Activated B cell treated with CpG ODN at 0.5 μM for 24 hours (primary cell): ENCODE measurements at regions of chr11 and their contacts with region 1.

Region 1: DNA sequence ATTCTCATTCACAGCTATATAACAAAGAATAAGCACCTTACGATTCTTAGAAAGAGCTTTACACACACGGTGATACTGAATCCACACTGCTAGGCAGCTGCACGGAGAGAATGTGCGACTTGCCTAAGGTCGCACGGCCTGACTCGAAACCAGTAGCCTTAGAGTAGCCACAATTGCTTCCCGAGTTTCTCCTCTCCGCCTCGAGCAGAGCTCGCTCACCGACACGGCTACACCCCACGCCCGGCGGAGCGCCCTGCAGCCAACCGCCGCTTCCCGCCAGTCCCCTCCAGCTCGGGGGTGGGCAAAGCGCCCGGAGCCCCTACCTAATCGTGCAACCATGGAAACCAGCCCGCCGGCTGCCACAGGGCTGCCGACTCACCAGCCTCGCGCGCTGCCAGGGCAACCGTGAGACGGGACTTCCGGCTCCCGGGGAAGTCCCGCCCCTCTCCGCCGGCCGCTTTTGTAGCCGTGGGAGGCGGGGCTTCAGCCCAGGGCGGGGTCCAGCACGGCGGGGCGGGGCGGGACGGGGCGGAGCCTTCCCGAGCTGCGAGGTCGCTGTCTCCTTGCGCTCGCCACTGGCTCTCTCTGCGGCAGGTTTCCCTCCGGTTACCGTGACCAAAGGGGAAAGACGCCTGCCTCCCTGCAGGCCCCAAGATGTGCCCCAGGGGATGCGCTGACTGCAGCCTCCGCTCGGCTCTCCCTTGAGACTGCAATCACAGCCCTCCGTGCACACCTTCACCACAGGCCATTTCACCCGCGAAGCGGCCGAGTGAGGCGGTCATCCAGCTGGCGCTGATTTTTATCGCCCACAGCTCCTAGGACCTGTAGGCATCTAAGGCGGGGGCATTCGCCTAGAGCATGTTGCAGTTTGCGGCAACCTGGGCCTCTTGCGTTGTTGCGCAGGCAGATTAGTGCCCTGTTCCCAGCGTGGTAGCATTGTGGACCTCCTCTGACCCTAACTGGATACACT is 1.1 kb downstream of the BSCL2 start:
- DNase-seq: peak; percentile 90
- ATAC-seq: peak; percentile 73
- H3K4me3 Mint-ChIP-seq: peak overlapping the region; percentile 92
- H3K27ac Mint-ChIP-seq: peak overlapping the region; percentile 99
- H3K4me1 Mint-ChIP-seq: peaks cover 49% of the 10 kb centered on the region
- H3K27me3 Mint-ChIP-seq: no peaks in the 10 kb centered on the region
- CTCF ChIP-seq: no peak

Region 2: GRCh38 chr11:62054484-62055121 is 651.6 kb before region 1 on chr11:
- CTCF ChIA-PET with region 1: no interaction called
- POLR2A ChIA-PET with region 1: no interaction called
- intact Hi-C with region 1: no loop called
- DNase-seq: no peak
- ATAC-seq: no peak
- H3K4me3 Mint-ChIP-seq: no peak overlapping the region
- H3K27ac Mint-ChIP-seq: no peak overlapping the region
- H3K4me1 Mint-ChIP-seq: no peaks in the 10 kb centered on the region
- H3K27me3 Mint-ChIP-seq: peaks cover 23% of the 10 kb centered on the region
- CTCF ChIP-seq: no peak

Region 3: GRCh38 chr11:62573592-62574362 is 132.4 kb before region 1 on chr11 and contains the start of gene EEF1G:
- CTCF ChIA-PET with region 1: no interaction called
- POLR2A ChIA-PET with region 1: interaction called, 15 read pairs
- intact Hi-C with region 1: no loop called
- DNase-seq: peak; percentile 92
- ATAC-seq: peak; percentile 94
- H3K4me3 Mint-ChIP-seq: peak within 1 kb of the TSS; percentile 97
- H3K27ac Mint-ChIP-seq: peak within 1 kb of the TSS; percentile 94
- H3K4me1 Mint-ChIP-seq: peaks cover 51% of the 10 kb centered on the region
- H3K27me3 Mint-ChIP-seq: no peaks in the 10 kb centered on the region
- CTCF ChIP-seq: no peak
- total RNA-seq, gene EEF1G: 2,373 and 2,524 TPM in 2 replicates

Region 4: DNA sequence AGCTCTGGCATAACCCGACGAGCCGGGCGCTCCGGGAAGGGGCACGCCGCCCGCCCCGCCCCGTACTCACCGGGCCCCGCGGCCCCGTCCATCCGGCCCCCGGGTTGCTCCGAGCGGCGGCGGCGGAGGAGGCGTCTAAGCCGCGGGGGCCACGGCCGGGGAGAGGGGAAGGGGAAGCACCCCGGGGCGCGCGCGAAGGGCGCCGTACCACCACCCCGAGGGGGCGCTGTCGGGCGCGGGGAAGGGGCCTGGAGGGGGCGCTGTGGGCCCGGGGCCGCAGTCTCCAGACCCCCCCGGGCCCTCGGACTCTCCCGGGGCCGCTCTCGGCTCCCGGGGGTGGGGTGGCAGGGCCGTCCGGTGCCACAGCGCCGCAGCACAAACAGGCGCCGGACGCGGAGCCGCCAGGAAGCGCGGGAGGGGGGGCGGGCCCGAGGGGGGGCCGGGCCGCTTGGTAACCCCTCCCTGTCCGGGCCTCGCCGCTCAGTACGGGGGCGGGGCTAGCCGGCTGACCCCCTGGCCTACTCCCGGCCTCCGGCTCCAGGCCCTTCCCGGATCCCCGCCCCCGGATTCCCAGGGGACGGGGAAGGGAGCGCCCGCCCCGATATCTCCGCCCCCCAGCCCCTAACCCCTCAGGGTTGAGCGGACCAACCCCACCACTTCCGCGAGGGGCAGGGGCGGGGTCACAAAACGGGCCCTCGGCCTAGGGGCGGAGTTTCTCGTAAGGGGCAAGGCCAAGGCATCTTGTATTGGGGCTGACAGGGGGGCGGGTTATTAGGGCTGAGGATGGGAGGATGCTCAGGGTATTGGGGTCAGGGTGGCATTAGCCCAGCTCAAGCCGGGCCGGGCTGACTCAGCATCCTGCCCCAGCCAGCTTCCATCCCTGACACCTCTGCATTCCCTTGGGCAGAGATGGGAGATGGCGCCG is 93.5 kb before region 1 on chr11 and contains the starts of genes EML3 and ROM1:
- CTCF ChIA-PET with region 1: no interaction called
- POLR2A ChIA-PET with region 1: no interaction called
- intact Hi-C with region 1: loop called (anchors 1 kb)
- DNase-seq: peak; percentile 95
- ATAC-seq: peak; percentile 82
- H3K4me3 Mint-ChIP-seq: peak within 1 kb of the TSS; percentile 93
- H3K27ac Mint-ChIP-seq: peak within 1 kb of the TSS; percentile 95
- H3K4me1 Mint-ChIP-seq: peaks cover 27% of the 10 kb centered on the region
- H3K27me3 Mint-ChIP-seq: no peaks in the 10 kb centered on the region
- CTCF ChIP-seq: peak; percentile 59
- total RNA-seq, gene EML3: 115 and 128 TPM in 2 replicates
- total RNA-seq, gene ROM1: 0.89 and 2.6 TPM in 2 replicates

Region 5: GRCh38 chr11:62645956-62646824 is 60.0 kb before region 1 on chr11 and contains the start of gene GANAB:
- CTCF ChIA-PET with region 1: no interaction called
- POLR2A ChIA-PET with region 1: interaction called, 15 read pairs
- intact Hi-C with region 1: loop called (anchors 1 kb)
- DNase-seq: peak; percentile 89
- ATAC-seq: peak; percentile 99
- H3K4me3 Mint-ChIP-seq: peak within 1 kb of the TSS; percentile 93
- H3K27ac Mint-ChIP-seq: peak within 1 kb of the TSS; percentile 86
- H3K4me1 Mint-ChIP-seq: peaks cover 34% of the 10 kb centered on the region
- H3K27me3 Mint-ChIP-seq: no peaks in the 10 kb centered on the region
- CTCF ChIP-seq: no peak
- total RNA-seq, gene GANAB: 187 and 189 TPM in 2 replicates

Region 6: DNA sequence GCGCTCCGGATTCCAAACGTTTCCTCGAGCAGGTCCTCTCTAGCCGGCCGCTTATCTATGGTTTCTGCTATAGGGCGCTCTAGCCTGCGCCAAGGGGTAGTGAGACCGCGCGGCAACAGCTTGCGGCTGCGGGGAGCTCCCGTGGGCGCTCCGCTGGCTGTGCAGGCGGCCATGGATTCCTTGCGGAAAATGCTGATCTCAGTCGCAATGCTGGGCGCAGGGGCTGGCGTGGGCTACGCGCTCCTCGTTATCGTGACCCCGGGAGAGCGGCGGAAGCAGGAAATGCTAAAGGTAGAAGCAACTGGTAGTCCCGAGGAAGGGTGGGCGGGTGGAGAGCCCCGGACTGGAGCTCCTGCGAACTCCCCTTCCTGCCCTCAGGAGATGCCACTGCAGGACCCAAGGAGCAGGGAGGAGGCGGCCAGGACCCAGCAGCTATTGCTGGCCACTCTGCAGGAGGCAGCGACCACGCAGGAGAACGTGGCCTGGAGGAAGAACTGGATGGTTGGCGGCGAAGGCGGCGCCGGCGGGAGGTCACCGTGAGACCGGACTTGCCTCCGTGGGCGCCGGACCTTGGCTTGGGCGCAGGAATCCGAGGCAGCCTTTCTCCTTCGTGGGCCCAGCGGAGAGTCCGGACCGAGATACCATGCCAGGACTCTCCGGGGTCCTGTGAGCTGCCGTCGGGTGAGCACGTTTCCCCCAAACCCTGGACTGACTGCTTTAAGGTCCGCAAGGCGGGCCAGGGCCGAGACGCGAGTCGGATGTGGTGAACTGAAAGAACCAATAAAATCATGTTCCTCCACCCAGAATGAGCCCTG is 34.4 kb before region 1 on chr11 and contains the starts of genes LBHD1 and UQCC3:
- CTCF ChIA-PET with region 1: no interaction called
- POLR2A ChIA-PET with region 1: interaction called, 86 read pairs
- intact Hi-C with region 1: no loop called
- DNase-seq: peak; percentile 61
- ATAC-seq: peak; percentile 82
- H3K4me3 Mint-ChIP-seq: peak within 1 kb of the TSS; percentile 100
- H3K27ac Mint-ChIP-seq: peak within 1 kb of the TSS; percentile 98
- H3K4me1 Mint-ChIP-seq: peaks cover 62% of the 10 kb centered on the region
- H3K27me3 Mint-ChIP-seq: no peaks in the 10 kb centered on the region
- CTCF ChIP-seq: no peak
- total RNA-seq, gene LBHD1: 19.1 and 24.9 TPM in 2 replicates
- total RNA-seq, gene UQCC3: 8.3 and 9.4 TPM in 2 replicates

Region 7: GRCh38 chr11:62771144-62772021 is 65.2 kb after region 1 on chr11 and contains the start of gene TAF6L:
- CTCF ChIA-PET with region 1: no interaction called
- POLR2A ChIA-PET with region 1: interaction called, 24 read pairs
- intact Hi-C with region 1: no loop called
- DNase-seq: peak; percentile 81
- ATAC-seq: peak; percentile 88
- H3K4me3 Mint-ChIP-seq: peak within 1 kb of the TSS; percentile 92
- H3K27ac Mint-ChIP-seq: peak within 1 kb of the TSS; percentile 94
- H3K4me1 Mint-ChIP-seq: peaks cover 28% of the 10 kb centered on the region
- H3K27me3 Mint-ChIP-seq: no peaks in the 10 kb centered on the region
- CTCF ChIP-seq: no peak
- total RNA-seq, gene TAF6L: 32.9 and 38.6 TPM in 2 replicates

Region 8: DNA sequence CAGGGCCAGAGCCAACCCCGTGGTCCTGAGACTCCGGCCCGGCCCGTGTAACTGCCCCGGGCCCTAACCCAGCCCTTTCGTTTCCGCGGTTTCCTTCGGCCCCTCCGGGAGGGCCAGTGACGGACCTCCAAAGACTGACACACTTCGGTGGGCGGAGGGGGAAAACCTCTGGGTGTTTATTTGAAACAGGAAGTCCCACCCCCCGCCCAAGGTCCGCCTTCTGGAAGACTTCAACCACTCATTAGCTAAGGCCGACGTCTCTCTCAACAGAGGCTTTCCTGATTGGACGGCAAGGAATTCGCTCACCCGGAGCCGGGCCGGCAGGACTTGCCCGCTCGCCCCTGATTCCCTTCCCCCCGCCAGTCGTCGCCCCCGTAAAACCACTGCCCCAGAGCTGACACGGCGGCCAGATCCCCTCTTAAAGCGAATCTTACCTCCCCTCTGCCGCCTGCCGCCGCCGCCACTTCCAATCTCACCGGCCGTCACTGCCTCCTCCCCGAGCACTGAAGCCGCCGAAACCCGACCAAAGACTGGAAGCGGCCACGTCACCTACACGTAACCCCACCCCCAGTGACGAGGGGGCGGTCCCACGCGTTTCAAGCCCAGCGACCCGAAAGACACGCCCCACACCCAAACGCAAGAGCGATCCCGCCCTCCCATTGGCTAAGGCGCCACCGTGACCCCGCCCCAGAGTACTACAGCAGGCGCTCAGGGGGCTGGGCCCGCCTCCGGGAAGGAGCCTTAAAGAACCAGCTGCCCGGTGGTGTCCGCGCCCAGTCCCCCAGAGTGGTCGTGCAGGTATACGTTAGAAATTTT is 125.6 kb after region 1 on chr11 and contains the start of gene STX5:
- CTCF ChIA-PET with region 1: no interaction called
- POLR2A ChIA-PET with region 1: interaction called, 21 read pairs
- intact Hi-C with region 1: no loop called
- DNase-seq: peak; percentile 98
- ATAC-seq: peak; percentile 91
- H3K4me3 Mint-ChIP-seq: peak within 1 kb of the TSS; percentile 100
- H3K27ac Mint-ChIP-seq: peak within 1 kb of the TSS; percentile 100
- H3K4me1 Mint-ChIP-seq: peaks cover 47% of the 10 kb centered on the region
- H3K27me3 Mint-ChIP-seq: no peaks in the 10 kb centered on the region
- CTCF ChIP-seq: no peak
- total RNA-seq, gene STX5: 58.4 and 71.5 TPM in 2 replicates